ENCODE measurements at regions of chr15 and their contacts with region 1.

Region 1: DNA sequence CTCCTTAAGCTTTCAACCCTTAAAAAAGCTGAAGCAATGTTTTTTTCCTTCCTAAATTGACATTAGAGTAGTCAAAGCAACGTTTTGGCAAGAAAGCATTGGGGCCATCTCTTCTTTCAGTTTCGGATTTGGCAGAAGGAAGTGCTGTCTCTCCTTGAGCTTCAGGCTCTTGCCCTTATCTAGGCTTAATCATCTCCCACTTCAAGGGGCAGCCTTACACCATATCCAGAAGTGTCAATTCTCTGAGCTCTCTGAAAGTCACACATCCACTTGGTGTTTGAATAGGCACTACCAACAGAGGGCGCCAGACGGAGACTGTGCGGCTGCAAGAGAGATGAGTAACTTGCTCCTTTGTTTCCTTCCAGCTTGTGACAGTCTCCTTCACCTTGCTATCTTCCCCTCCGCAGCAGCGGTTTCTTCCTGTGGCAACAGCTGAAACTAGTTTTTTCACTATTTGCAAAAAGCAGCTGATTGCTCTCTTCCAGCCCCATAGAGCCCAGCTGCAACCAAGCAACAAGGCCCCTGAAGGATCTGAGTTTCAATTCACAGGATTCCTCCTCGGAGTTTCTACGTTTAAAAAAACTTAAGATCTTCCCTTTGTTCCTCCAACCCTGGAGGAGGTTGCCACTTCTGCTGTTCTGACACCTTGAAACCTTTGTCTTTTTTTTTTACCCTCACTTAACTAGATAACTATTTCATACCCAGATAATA is 147.0 kb upstream of the SLCO3A1 start:
- DNase-seq: peak; percentile 92
- ATAC-seq: peak; percentile 99
- H3K4me3 Mint-ChIP-seq: no peak overlapping the region
- H3K27ac Mint-ChIP-seq: peak overlapping the region; percentile 74
- H3K4me1 Mint-ChIP-seq: peaks cover 23% of the 10 kb centered on the region
- H3K27me3 Mint-ChIP-seq: peaks cover 21% of the 10 kb centered on the region

Region 2: GRCh38 chr15:91302588-91303439 is 403.7 kb before region 1 on chr15:
- CTCF ChIA-PET with region 1: interaction called, 24 read pairs
- DNase-seq: peak; percentile 50
- ATAC-seq: peak; percentile 73
- H3K4me3 Mint-ChIP-seq: no peak overlapping the region
- H3K27ac Mint-ChIP-seq: no peak overlapping the region
- H3K4me1 Mint-ChIP-seq: peaks cover 10% of the 10 kb centered on the region
- H3K27me3 Mint-ChIP-seq: peaks cover 67% of the 10 kb centered on the region

Region 3: DNA sequence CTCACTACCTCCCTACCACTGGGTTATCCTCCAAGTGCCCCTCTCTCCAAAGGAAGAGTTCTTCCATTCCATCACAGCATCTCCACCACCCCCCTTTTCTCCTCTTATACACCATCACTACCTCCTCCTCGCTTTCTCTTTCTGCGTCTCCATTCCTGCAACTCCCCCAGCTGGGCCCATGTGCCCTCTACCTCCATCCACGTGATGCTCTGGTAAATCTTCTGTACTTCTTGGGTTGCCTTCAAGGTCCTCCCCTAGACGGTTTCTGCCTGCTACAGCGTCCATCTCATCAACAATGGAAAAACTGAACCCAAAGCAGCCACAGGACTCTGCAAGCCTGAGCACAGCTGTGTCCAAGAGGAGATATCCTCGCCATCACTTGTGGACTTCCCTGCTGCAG is 17.5 kb after region 1 on chr15:
- CTCF ChIA-PET with region 1: interaction called, 14 read pairs
- DNase-seq: no peak
- ATAC-seq: no peak
- H3K4me3 Mint-ChIP-seq: no peak overlapping the region
- H3K27ac Mint-ChIP-seq: no peak overlapping the region
- H3K4me1 Mint-ChIP-seq: no peaks in the 10 kb centered on the region
- H3K27me3 Mint-ChIP-seq: peaks cover 20% of the 10 kb centered on the region

Region 4: DNA sequence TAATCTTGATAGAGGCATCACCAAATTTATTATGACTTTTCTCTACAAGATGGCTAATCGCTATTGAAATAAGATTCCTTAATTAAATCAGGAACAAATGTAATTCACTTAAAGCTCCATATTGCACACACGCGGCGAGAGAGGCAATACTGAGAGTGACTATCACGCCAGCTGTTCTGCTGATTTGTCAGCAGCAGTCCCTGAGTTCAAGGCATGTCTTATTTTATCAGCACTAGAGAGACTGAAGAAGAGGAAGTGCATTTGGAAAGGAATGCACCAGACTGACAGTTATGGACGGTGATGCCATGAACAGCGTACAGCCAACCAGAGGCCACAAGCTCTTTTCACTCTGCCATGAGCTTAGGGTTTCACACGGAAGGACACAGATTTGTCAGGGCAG is 63.4 kb after region 1 on chr15:
- CTCF ChIA-PET with region 1: no interaction called
- DNase-seq: no peak
- ATAC-seq: no peak
- H3K4me3 Mint-ChIP-seq: no peak overlapping the region
- H3K27ac Mint-ChIP-seq: no peak overlapping the region
- H3K4me1 Mint-ChIP-seq: no peaks in the 10 kb centered on the region
- H3K27me3 Mint-ChIP-seq: peaks cover 19% of the 10 kb centered on the region

Region 5: GRCh38 chr15:91852741-91853510 is 146.4 kb after region 1 on chr15:
- CTCF ChIA-PET with region 1: interaction called, 15 read pairs
- DNase-seq: peak; percentile 79
- ATAC-seq: peak; percentile 79
- H3K4me3 Mint-ChIP-seq: peak overlapping the region; percentile 77
- H3K27ac Mint-ChIP-seq: peak overlapping the region; percentile 81
- H3K4me1 Mint-ChIP-seq: peaks cover 58% of the 10 kb centered on the region
- H3K27me3 Mint-ChIP-seq: peaks cover 3% of the 10 kb centered on the region

Region 6: DNA sequence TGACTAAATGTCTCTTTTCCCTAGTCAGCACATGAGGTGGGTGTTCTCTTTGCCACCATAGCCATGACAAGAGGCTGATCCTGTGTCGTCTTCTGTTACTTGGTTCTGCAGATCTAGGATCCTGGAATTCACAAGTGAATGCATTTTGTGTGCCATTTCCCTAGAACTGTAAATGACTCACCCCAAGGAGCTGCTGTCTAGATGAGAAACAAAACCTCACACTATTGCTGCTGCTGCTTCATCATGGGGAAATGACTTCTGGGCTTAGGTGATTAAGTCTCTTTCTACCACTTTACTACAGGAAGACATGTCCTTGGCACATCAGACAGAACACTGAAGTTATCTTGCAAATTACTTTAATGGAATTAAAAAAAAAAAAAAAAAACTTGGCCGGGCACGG is 201.9 kb after region 1 on chr15:
- CTCF ChIA-PET with region 1: no interaction called
- DNase-seq: no peak
- ATAC-seq: no peak
- H3K4me3 Mint-ChIP-seq: no peak overlapping the region
- H3K27ac Mint-ChIP-seq: no peak overlapping the region
- H3K4me1 Mint-ChIP-seq: peaks cover 2% of the 10 kb centered on the region
- H3K27me3 Mint-ChIP-seq: no peaks in the 10 kb centered on the region

Region 7: GRCh38 chr15:91942676-91943576 is 236.4 kb after region 1 on chr15:
- CTCF ChIA-PET with region 1: interaction called, 16 read pairs
- DNase-seq: peak; percentile 70
- ATAC-seq: peak; percentile 86
- H3K4me3 Mint-ChIP-seq: peak overlapping the region; percentile 50
- H3K27ac Mint-ChIP-seq: peak overlapping the region; percentile 57
- H3K4me1 Mint-ChIP-seq: peaks cover 23% of the 10 kb centered on the region
- H3K27me3 Mint-ChIP-seq: no peaks in the 10 kb centered on the region

Region 8: GRCh38 chr15:92077353-92078085 is 371.0 kb after region 1 on chr15:
- CTCF ChIA-PET with region 1: interaction called, 36 read pairs
- DNase-seq: peak; percentile 74
- ATAC-seq: peak; percentile 50
- H3K4me3 Mint-ChIP-seq: no peak overlapping the region
- H3K27ac Mint-ChIP-seq: no peak overlapping the region
- H3K4me1 Mint-ChIP-seq: peaks cover 31% of the 10 kb centered on the region
- H3K27me3 Mint-ChIP-seq: no peaks in the 10 kb centered on the region

Measured in activated CD8-positive, alpha-beta memory T cell treated with anti-CD3 and anti-CD28 coated beads, Interleukin-2, amount 10 ng/mL, durations not matched to agents 7 days and 5 days (primary cell).